ENCODE measurements at regions of chr12 and their contacts with region 1.

Region 1: GRCh38 chr12:125092872-125093680 is 27.8 kb downstream of the AACS start:
- DNase-seq: peak; percentile 83
- H3K4me3 Mint-ChIP-seq: peak overlapping the region; percentile 36
- H3K27ac Mint-ChIP-seq: peak overlapping the region; percentile 34
- H3K4me1 Mint-ChIP-seq: peaks cover 41% of the 10 kb centered on the region
- H3K27me3 Mint-ChIP-seq: no peaks in the 10 kb centered on the region
- CTCF ChIP-seq: peak; percentile 42

Region 2: DNA sequence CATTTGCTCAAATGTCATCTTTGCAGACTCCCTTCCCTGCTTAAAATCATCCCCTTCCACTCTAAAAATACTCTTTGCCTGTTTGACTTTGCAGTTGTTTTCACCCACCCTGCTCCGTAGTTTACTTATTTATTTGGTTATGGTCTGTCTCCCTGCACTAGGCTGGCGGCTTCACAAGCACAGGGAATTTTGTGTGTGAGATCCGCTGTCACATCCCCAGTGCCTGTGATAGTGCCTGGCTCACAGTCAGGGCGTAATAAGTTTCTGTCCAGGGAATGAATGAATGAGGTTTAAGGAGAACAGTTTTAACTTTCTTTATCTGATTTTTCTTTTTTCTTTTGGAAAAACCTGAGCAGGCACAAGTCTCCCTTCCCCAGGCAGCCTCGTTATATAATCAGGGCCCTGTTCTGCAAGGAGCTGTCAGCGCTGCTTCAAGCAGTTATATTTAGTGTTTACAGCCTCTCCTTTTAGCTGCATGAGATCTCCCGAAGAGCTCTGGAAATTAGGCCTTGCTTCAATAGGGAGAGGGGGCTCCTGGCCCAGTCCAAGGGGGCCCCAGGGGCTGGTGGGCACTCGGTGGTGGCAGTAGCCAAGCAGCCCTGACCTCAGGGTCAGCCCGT is 79.3 kb after region 1 on chr12:
- CTCF ChIA-PET with region 1: no interaction called
- intact Hi-C with region 1: no loop called
- DNase-seq: no peak
- H3K4me3 Mint-ChIP-seq: no peak overlapping the region
- H3K27ac Mint-ChIP-seq: no peak overlapping the region
- H3K4me1 Mint-ChIP-seq: no peaks in the 10 kb centered on the region
- H3K27me3 Mint-ChIP-seq: peaks cover 82% of the 10 kb centered on the region
- CTCF ChIP-seq: no peak

Region 3: GRCh38 chr12:125183187-125184067 is 90.4 kb after region 1 on chr12:
- CTCF ChIA-PET with region 1: interaction called, 6 read pairs
- intact Hi-C with region 1: loop called (anchors 2 kb)
- DNase-seq: peak; percentile 92
- H3K4me3 Mint-ChIP-seq: peak overlapping the region; percentile 25
- H3K27ac Mint-ChIP-seq: no peak overlapping the region
- H3K4me1 Mint-ChIP-seq: peaks cover 18% of the 10 kb centered on the region
- H3K27me3 Mint-ChIP-seq: peaks cover 55% of the 10 kb centered on the region
- CTCF ChIP-seq: peak; percentile 99

Region 4: GRCh38 chr12:125340791-125341190 is 247.7 kb after region 1 on chr12:
- CTCF ChIA-PET with region 1: no interaction called
- intact Hi-C with region 1: loop called (anchors 10 kb)
- DNase-seq: peak; percentile 8
- H3K4me3 Mint-ChIP-seq: no peak overlapping the region
- H3K27ac Mint-ChIP-seq: no peak overlapping the region
- H3K4me1 Mint-ChIP-seq: no peaks in the 10 kb centered on the region
- H3K27me3 Mint-ChIP-seq: peaks cover 84% of the 10 kb centered on the region
- CTCF ChIP-seq: no peak